Aorta (tissue), 5 donors: ENCODE measurements at regions of chr22 and their contacts with region 1.

Region 1: DNA sequence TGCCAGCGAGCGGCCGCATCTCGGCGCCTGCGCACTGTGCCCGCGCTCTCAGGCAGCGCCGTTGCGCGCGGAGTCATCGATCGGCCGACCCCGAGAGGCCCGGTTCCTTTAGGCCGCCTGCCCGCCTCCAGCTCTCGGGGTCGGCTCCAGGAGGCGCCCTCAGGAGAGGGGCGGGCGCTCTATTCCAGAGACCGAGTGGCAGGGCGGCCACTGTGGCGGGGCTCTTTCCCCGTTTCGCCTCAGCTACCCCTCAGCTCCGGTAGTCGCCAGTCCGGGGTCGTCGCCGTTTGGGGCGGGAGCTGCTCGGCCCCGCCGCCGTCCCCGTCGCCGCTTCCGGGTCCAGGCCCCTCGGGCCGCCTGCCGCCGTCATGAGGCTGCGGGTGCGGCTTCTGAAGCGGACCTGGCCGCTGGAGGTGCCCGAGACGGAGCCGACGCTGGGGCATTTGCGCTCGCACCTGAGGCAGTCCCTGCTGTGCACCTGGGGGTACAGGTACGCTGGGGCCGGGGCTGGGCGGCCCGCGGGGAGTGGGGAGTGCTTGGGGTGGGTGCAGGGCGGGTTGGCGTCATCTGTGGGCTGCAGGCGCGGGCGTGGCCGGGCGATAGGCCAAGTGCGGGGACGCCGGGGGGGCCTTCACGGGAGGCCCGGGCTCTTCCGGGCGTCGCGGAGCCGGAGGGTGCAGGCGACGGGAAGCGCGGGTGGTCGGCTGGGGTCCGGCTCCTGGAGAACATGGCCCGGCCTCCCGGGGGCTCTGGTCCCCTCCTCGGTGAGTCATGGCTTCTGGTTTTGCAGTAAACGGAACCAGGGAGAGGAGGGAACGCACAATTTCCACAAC is at the start of gene FBXO7:
- DNase-seq: peak; percentile 95 to 98
- ATAC-seq: peak; percentile 95
- H3K4me3 ChIP-seq: peak within 1 kb of the TSS; percentile 54 to 94
- H3K27ac ChIP-seq: peak within 1 kb of the TSS; percentile 49 to 98
- H3K4me1 ChIP-seq: no peaks in the 10 kb centered on the region
- H3K27me3 ChIP-seq: no peaks in the 10 kb centered on the region
- total RNA-seq, gene FBXO7: 71.9 to 73.1 TPM

Region 2: GRCh38 chr22:31977141-31977841 is 497.6 kb before region 1 on chr22:
- intact Hi-C with region 1: loop called (anchors 5 to 10 kb)
- DNase-seq: peak; percentile 78 to 90
- ATAC-seq: peak; percentile 78
- H3K4me3 ChIP-seq: no peak overlapping the region
- H3K27ac ChIP-seq: no peak overlapping the region
- H3K4me1 ChIP-seq: no peaks in the 10 kb centered on the region
- H3K27me3 ChIP-seq: no peaks in the 10 kb centered on the region

Region 3: GRCh38 chr22:32411829-32412592 is 62.8 kb before region 1 on chr22 and contains the start of gene RTCB:
- intact Hi-C with region 1: loop called (anchors 1 to 2 kb)
- DNase-seq: peak; percentile 95 to 98
- ATAC-seq: peak; percentile 94
- H3K4me3 ChIP-seq: peak within 1 kb of the TSS; percentile 96 to 97
- H3K27ac ChIP-seq: no peak within 1 kb of the TSS
- H3K4me1 ChIP-seq: peaks cover 3 to 9% of the 10 kb centered on the region in 2 donors
- H3K27me3 ChIP-seq: no peaks in the 10 kb centered on the region
- total RNA-seq, gene RTCB: 48.7 to 50.0 TPM

Region 4: DNA sequence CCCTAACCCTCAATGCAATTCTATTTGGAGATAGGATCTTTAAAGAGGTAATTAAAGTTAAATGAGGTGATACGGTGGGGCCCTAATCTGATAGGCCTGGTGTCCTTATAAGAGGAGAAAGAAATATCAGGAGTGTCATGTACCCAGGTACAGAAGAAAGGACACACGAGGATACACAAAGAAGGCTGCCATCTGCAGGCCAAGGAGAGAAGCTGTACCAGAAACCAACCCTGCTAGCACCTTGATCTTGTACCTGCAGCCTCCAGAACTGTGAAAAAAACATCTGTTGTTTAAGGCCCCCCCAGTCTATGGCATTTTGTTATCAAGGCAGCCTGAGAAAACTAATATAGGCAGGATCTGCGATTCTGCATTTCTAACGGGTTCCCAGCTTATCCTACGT is 44.0 kb after region 1 on chr22:
- intact Hi-C with region 1: no loop called
- DNase-seq: no peak
- ATAC-seq: no peak
- H3K4me3 ChIP-seq: no peak overlapping the region
- H3K27ac ChIP-seq: no peak overlapping the region
- H3K4me1 ChIP-seq: no peaks in the 10 kb centered on the region
- H3K27me3 ChIP-seq: no peaks in the 10 kb centered on the region